ENCODE measurements at regions of chr5 and their contacts with region 1.

Region 1: DNA sequence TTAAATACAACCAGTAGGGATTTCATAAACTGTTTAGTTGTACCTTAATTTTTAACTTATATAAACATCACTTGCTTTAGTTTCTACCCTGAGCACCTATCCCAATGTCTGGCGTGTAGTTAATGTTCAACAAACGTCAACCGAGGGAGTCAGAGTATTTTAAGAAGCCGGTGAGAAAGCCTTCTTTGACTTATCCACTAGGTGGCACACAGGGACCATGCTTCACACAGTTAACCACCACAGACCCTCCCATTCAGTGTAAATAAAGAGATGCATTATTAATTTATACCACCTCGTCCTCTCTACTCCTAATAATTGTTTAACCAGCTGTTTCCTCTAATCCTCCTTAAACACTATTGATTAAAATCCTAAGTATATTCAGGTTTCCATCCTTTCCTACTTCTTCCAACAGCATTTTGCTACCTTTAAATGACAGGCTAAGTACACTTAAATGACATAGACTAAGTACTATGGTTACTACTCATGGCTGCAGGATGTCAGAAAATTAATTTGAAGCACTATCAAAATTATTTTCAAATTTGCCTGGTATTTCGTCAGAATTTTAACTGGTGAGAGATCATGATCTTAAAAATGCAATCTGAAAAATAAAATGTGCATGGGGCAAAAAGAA is 2.3 kb downstream of the HAPLN1 start:
- DNase-seq: peak in 1 of 2 donors; percentile 70
- H3K4me3 ChIP-seq: peak overlapping the region in 1 of 2 donors; percentile 5
- H3K27ac ChIP-seq: no peak overlapping the region
- H3K4me1 ChIP-seq: peaks cover 0 to 12% of the 10 kb centered on the region in 2 donors
- H3K27me3 ChIP-seq: no peaks in the 10 kb centered on the region
- CTCF ChIP-seq: peak; percentile 71 to 91 (median 77)

Region 2: GRCh38 chr5:83701886-83702285 is 16.4 kb before region 1 on chr5:
- intact Hi-C with region 1: no loop called
- DNase-seq: no peak
- H3K4me3 ChIP-seq: no peak overlapping the region
- H3K27ac ChIP-seq: no peak overlapping the region
- H3K4me1 ChIP-seq: no peaks in the 10 kb centered on the region
- H3K27me3 ChIP-seq: no peaks in the 10 kb centered on the region
- CTCF ChIP-seq: no peak

Region 3: DNA sequence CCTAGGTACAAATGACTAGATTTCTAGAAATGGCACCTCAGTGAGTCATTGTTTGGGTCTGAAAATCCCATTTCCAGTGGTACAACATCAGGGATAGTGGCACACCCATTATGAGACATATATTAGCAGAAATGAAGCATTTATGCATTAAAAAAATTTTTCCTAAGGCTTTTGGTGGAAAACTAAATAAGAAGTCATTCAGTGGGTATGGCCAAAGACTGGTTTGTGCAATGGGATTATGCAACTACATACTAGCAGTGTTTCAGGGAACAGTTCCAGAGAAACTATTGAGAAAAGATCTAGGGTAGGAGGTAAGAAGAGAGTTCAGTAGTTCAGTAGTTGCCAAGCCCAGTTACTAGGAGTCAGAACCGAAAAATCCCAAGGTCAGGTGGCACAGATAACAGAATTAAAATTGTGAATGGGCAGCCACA is 108.8 kb after region 1 on chr5:
- intact Hi-C with region 1: loop called (anchors 5 kb)
- DNase-seq: no peak
- H3K4me3 ChIP-seq: no peak overlapping the region
- H3K27ac ChIP-seq: no peak overlapping the region
- H3K4me1 ChIP-seq: no peaks in the 10 kb centered on the region
- H3K27me3 ChIP-seq: no peaks in the 10 kb centered on the region
- CTCF ChIP-seq: no peak

Region 4: DNA sequence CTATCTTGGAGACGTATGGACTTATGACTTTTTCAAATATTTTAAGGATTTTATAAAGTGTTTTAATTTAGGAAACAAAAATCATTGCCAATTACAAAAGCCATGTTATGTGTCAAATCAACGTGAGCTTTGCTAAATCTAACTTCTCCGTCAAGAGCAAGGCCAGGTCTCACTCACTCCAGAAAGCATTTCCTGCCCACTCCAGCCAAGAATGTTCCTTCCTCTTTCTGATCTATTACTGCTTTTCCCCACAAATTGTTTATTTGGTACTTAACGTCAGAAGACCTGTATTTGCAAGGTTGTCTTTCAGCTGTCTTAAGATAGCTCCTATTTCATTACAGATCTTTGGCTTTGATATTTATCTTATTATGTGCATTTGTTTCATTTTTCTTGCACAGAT is 195.9 kb after region 1 on chr5:
- intact Hi-C with region 1: loop called (anchors 5 kb)
- DNase-seq: no peak
- H3K4me3 ChIP-seq: no peak overlapping the region
- H3K27ac ChIP-seq: peak overlapping the region in 1 of 2 donors; percentile 44
- H3K4me1 ChIP-seq: peaks cover 6 to 15% of the 10 kb centered on the region in 2 donors
- H3K27me3 ChIP-seq: no peaks in the 10 kb centered on the region
- CTCF ChIP-seq: no peak

Region 5: GRCh38 chr5:84057211-84057610 is 338.9 kb after region 1 on chr5:
- intact Hi-C with region 1: no loop called
- DNase-seq: no peak
- H3K4me3 ChIP-seq: no peak overlapping the region
- H3K27ac ChIP-seq: no peak overlapping the region
- H3K4me1 ChIP-seq: no peaks in the 10 kb centered on the region
- H3K27me3 ChIP-seq: no peaks in the 10 kb centered on the region
- CTCF ChIP-seq: no peak

Region 6: GRCh38 chr5:84255315-84255714 is 537.0 kb after region 1 on chr5:
- intact Hi-C with region 1: loop called (anchors 1 kb)
- DNase-seq: no peak
- H3K4me3 ChIP-seq: no peak overlapping the region
- H3K27ac ChIP-seq: peak overlapping the region in 1 of 2 donors; percentile 9
- H3K4me1 ChIP-seq: peaks cover 0 to 3% of the 10 kb centered on the region in 2 donors
- H3K27me3 ChIP-seq: no peaks in the 10 kb centered on the region
- CTCF ChIP-seq: peak in 2 of 3 experiments; percentile 17 to 44

Region 7: DNA sequence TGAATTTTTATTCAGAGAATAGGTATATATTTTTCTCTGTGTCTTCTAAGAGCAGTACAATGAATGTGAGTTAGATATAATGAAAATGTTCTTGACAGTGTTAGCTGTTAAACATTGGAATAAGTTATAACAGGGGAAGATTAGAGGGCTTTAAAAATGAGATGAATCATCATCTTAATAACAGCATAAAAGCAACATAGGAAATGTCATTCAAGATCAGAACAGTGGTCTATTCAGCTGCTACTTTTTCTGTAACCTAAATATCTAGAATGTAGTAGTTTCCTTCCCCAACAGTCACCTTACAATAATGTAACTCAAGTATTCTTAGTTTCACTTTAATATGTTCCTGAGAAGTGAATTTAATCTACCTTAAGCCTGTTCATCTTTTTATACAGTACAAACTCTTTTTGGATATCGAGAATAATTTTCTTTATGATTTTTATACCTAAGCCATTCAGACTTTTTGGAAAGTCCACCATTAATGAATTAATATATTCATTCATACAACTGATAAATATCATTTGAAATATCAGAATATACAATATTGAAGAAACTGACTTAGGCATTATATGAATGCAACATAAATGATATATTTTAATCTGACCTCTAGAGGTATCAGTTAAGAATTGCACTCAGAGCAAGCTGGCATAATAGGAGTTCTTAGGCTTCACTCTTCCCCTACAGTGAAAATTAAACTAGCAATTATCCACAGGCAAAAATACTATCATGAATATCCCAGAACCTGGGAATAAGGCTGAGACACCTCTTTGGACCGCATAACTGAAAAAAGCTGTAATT is 732.5 kb after region 1 on chr5:
- intact Hi-C with region 1: loop called (anchors 5 kb)
- DNase-seq: no peak
- H3K4me3 ChIP-seq: no peak overlapping the region
- H3K27ac ChIP-seq: no peak overlapping the region
- H3K4me1 ChIP-seq: no peaks in the 10 kb centered on the region
- H3K27me3 ChIP-seq: no peaks in the 10 kb centered on the region
- CTCF ChIP-seq: peak in 2 of 3 experiments; percentile 22 to 49